Dendritic cell treated with granulocyte-macrophage colony-stimulating factor and Interleukin-4, amounts not matched to agents 40 ng/mL and 50 ng/mL, for 4 days (primary cell): ENCODE measurements at regions of chr3 and their contacts with region 1.

Region 1: GRCh38 chr3:130725746-130726145 is 20.9 kb downstream of the PIK3R4 start:
- H3K4me3 Mint-ChIP-seq: no peak overlapping the region
- H3K27ac Mint-ChIP-seq: no peak overlapping the region
- H3K4me1 Mint-ChIP-seq: no peaks in the 10 kb centered on the region
- H3K27me3 Mint-ChIP-seq: no peaks in the 10 kb centered on the region

Region 2: GRCh38 chr3:130746246-130747039 is 20.7 kb after region 1 on chr3 and contains the start of gene PIK3R4:
- intact Hi-C with region 1: loop called (anchors 2 kb)
- H3K4me3 Mint-ChIP-seq: peak within 1 kb of the TSS; percentile 84
- H3K27ac Mint-ChIP-seq: peak within 1 kb of the TSS; percentile 97
- H3K4me1 Mint-ChIP-seq: peaks cover 41% of the 10 kb centered on the region
- H3K27me3 Mint-ChIP-seq: no peaks in the 10 kb centered on the region

Region 3: GRCh38 chr3:131018970-131019369 is 293.2 kb after region 1 on chr3:
- intact Hi-C with region 1: no loop called
- H3K4me3 Mint-ChIP-seq: no peak overlapping the region
- H3K27ac Mint-ChIP-seq: no peak overlapping the region
- H3K4me1 Mint-ChIP-seq: peaks cover 23% of the 10 kb centered on the region
- H3K27me3 Mint-ChIP-seq: no peaks in the 10 kb centered on the region